GM10248 (cell line): ENCODE measurements at regions of chr6 and their contacts with region 1.

Region 1: GRCh38 chr6:134640975-134641429 is 308.9 kb downstream of the ALDH8A1 start:
- DNase-seq: peak; percentile 67
- CTCF ChIP-seq: peak; percentile 96

Region 2: DNA sequence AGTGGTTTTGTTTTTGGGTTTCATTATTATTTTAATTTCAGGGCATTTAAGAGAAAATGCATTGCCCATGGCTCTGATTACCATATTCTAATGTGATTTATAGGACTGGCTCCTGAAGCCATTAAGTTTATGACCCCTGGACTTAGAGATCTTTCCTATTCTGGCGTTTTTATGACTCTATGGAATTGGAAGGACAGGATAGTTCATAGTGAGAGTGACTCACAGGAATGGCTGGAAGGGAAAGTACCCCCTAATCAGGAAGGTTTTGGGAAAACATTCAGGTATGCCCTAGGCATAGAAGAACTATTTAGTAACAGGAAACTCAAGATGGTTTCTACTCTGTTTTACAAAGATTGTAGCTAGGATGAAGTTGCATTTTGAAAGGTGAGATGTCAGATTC is 480.0 kb before region 1 on chr6:
- CTCF ChIA-PET with region 1: interaction called, 22 read pairs
- POLR2A ChIA-PET with region 1: no interaction called
- DNase-seq: no peak
- CTCF ChIP-seq: no peak

Region 3: GRCh38 chr6:134174672-134175198 is 466.3 kb before region 1 on chr6:
- CTCF ChIA-PET with region 1: interaction called, 66 read pairs
- POLR2A ChIA-PET with region 1: no interaction called
- DNase-seq: peak; percentile 92
- CTCF ChIP-seq: no peak

Region 4: DNA sequence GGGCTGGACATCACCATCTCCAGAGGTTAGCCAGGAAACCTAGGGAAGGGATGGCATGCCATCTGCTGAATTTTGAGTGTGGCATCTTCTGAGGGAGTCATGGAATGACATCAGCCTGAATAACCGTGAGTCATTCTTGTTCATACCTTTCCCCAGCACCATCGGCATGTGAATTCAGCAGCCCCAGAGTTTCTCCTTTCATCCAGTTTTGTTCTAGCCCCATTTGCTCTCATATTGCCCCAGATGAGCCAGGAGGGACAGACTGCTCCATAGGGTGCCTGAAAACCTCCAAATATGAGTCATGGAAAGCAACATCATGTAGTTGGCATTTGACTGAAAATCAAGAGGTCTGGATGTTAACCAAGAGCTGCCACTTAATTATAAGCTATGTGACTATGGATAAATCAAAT is 103.9 kb before region 1 on chr6:
- CTCF ChIA-PET with region 1: no interaction called
- POLR2A ChIA-PET with region 1: no interaction called
- DNase-seq: no peak
- CTCF ChIP-seq: no peak

Region 5: DNA sequence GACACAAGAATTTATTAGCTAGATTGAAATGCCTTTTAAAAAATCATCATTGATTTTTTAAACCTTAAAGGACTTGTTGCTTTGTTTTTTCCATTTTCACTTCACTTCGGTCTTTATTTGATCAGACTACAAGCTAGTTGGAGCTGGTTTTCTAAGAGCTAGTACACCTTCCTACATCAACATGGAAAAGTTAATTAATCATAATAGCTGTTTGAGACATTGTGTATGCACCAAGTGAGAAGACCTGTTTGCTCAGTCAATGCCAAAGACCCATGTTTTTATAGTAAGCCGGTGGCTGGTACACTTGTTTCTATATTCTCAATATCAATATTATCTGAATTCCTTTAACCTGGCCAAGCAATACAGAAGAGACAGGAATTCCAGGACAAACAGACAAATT is 12.8 kb before region 1 on chr6:
- CTCF ChIA-PET with region 1: interaction called, 39 read pairs
- POLR2A ChIA-PET with region 1: no interaction called
- DNase-seq: no peak
- CTCF ChIP-seq: no peak